A673 (cell line): ENCODE measurements at regions of chr16 and their contacts with region 1.

Region 1: DNA sequence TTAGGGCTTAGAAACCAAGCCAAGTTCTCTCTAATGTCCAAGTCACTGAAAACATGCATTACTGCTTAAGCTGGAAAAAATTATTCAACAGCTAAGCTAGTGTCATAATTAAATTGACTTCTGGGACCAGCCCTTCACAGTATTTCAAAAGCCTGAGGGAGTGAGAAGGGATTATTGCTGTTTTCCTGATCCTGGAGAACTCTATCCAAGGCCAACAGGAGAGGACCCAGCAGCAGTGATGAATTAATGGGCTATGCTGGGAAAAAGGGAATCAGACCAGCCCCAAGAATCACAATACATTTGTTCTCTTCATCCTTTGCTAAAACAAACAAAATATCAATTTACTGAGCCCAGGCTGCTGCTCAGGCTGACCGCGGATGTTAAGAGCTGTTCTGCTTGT is 34.5 kb upstream of the CLEC3A start:
- DNase-seq: no peak
- H3K4me3 ChIP-seq: no peak overlapping the region
- H3K27ac ChIP-seq: no peak overlapping the region
- H3K4me1 ChIP-seq: no peaks in the 10 kb centered on the region
- H3K27me3 ChIP-seq: no peaks in the 10 kb centered on the region
- CTCF ChIP-seq: no peak

Region 2: GRCh38 chr16:77599793-77600415 is 387.9 kb before region 1 on chr16:
- CTCF ChIA-PET with region 1: no interaction called
- POLR2A ChIA-PET with region 1: no interaction called
- intact Hi-C with region 1: loop called (anchors 10 kb)
- DNase-seq: peak; percentile 50
- H3K4me3 ChIP-seq: no peak overlapping the region
- H3K27ac ChIP-seq: no peak overlapping the region
- H3K4me1 ChIP-seq: no peaks in the 10 kb centered on the region
- H3K27me3 ChIP-seq: no peaks in the 10 kb centered on the region
- CTCF ChIP-seq: peak; percentile 75

Region 3: DNA sequence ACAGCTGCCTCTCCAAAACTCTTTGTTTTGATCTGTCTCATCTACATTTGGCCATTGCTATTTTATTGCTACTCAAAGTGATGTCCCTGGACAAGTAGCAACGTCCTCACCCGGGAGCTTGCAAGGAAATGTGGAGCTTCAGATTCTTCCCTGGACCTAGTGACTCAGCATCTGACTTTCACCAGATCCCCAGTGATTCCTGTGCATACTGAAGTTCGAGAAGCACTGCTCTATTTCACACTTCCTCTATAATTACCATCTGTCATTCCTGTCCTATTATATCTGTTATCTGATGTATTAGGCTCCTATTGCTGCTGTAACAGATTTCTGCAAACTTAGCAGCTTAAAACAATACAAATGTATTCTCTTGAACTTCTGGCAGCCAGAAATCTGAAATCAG is 228.0 kb before region 1 on chr16:
- CTCF ChIA-PET with region 1: no interaction called
- POLR2A ChIA-PET with region 1: no interaction called
- intact Hi-C with region 1: no loop called
- DNase-seq: no peak
- H3K4me3 ChIP-seq: no peak overlapping the region
- H3K27ac ChIP-seq: no peak overlapping the region
- H3K4me1 ChIP-seq: no peaks in the 10 kb centered on the region
- H3K27me3 ChIP-seq: no peaks in the 10 kb centered on the region
- CTCF ChIP-seq: no peak

Region 4: GRCh38 chr16:77928096-77928495 is 59.7 kb before region 1 on chr16:
- CTCF ChIA-PET with region 1: no interaction called
- POLR2A ChIA-PET with region 1: no interaction called
- intact Hi-C with region 1: no loop called
- DNase-seq: no peak
- H3K4me3 ChIP-seq: no peak overlapping the region
- H3K27ac ChIP-seq: no peak overlapping the region
- H3K4me1 ChIP-seq: peaks cover 6% of the 10 kb centered on the region
- H3K27me3 ChIP-seq: no peaks in the 10 kb centered on the region
- CTCF ChIP-seq: no peak